ENCODE measurements at regions of chr19 and their contacts with region 1.

Region 1: DNA sequence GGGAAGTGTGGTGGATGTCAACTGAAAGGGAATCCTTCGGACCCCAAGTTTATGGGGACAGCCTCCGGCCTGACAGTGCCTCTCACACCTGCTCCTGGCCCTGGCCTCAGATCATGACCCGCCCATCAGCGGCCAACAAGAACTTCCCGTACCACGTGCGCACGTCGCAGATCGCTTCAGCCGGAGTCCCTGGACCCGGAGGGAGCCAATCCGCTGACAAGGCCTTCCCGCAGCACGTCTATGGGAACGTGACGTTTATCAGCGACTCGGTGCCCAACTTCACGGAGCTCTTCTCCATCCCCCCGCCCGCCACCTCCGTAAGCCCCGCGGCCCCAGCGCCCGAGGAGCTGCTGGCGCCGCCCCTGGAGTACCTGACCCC is 2.0 kb upstream of the MEGF8 start:
- H3K4me3 ChIP-seq: no peak overlapping the region
- H3K27ac ChIP-seq: no peak overlapping the region
- H3K4me1 ChIP-seq: peaks cover 23% of the 10 kb centered on the region
- CTCF ChIP-seq: no peak

Region 2: DNA sequence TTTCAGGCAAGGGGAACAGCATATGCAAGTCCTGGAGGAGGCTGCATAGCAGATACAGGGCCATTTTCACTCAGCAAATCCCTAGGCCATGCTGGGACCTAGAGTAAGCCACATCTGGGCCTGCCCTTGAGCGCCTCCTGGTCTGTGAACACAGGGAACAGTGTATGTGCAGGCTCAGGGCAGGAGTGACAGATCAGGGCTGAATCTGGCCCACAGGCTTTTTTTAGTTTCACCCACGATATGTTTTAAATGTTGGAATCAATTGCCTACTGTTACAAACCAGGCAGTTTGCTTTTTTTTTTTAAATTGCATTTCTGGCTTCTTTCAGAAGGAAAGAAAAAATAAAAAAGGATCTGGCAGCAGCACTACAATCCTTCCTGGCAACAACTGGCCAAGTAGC is 11.8 kb before region 1 on chr19:
- CTCF ChIA-PET with region 1: interaction called, 7 read pairs
- POLR2A ChIA-PET with region 1: interaction called, 10 read pairs
- H3K4me3 ChIP-seq: no peak overlapping the region
- H3K27ac ChIP-seq: no peak overlapping the region
- H3K4me1 ChIP-seq: no peaks in the 10 kb centered on the region; the same call in 1 of the 2 replicates
- CTCF ChIP-seq: peak; percentile 24; the same call in 1 of the 2 replicates

Measured in HEK293 (cell line).